T-cell (primary cell): ENCODE measurements at regions of chr19 and their contacts with region 1.

Region 1: GRCh38 chr19:42254989-42255765 is at the start of gene ERF:
- DNase-seq: peak; percentile 86 to 98 (median 91)
- ATAC-seq: peak; percentile 74 to 81 (median 76)
- H3K4me3 ChIP-seq: peak within 1 kb of the TSS; percentile 87 to 98
- H3K4me3 Mint-ChIP-seq: peak within 1 kb of the TSS; percentile 74 to 95 (median 75)
- H3K27ac ChIP-seq: peak within 1 kb of the TSS; percentile 90
- H3K27ac Mint-ChIP-seq: peak within 1 kb of the TSS; percentile 23 to 72
- H3K4me1 ChIP-seq: peaks cover 30 to 44% of the 10 kb centered on the region in 2 experiments
- H3K4me1 Mint-ChIP-seq: peaks cover 26 to 36% (median 32%) of the 10 kb centered on the region in 3 donors
- H3K27me3 ChIP-seq: peaks cover 0 to 5% of the 10 kb centered on the region in 2 experiments
- H3K27me3 Mint-ChIP-seq: peaks cover 0 to 2% of the 10 kb centered on the region in 2 donors
- total RNA-seq, gene ERF: 35.9 to 97.3 (median 44.6) TPM

Region 2: GRCh38 chr19:42316223-42317211 is 61.3 kb after region 1 on chr19:
- CTCF ChIA-PET with region 1: no interaction called
- POLR2A ChIA-PET with region 1: interaction called in 1 of 2 experiments, 10 read pairs
- DNase-seq: no peak
- ATAC-seq: no peak
- H3K4me3 ChIP-seq: no peak overlapping the region
- H3K4me3 Mint-ChIP-seq: peak overlapping the region in 1 of 3 donors; percentile 21
- H3K27ac ChIP-seq: no peak overlapping the region
- H3K27ac Mint-ChIP-seq: no peak overlapping the region
- H3K4me1 ChIP-seq: peaks cover 0 to 24% of the 10 kb centered on the region in 2 experiments
- H3K4me1 Mint-ChIP-seq: peaks cover 11 to 19% (median 11%) of the 10 kb centered on the region in 3 donors
- H3K27me3 ChIP-seq: peaks cover 13 to 42% of the 10 kb centered on the region in 2 experiments
- H3K27me3 Mint-ChIP-seq: peaks cover 29 to 33% of the 10 kb centered on the region in 2 donors